ENCODE measurements at regions of chr22 and their contacts with region 1.

Region 1: GRCh38 chr22:40116496-40117200 is 61.1 kb upstream of the TNRC6B start:
- DNase-seq: peak; percentile 74 to 87 (median 81)
- H3K4me3 ChIP-seq: no peak overlapping the region
- H3K4me3 Mint-ChIP-seq: peak overlapping the region; percentile 56 to 87 (median 68)
- H3K27ac ChIP-seq: peak overlapping the region; percentile 42
- H3K27ac Mint-ChIP-seq: peak overlapping the region; percentile 81 to 94 (median 86)
- H3K4me1 ChIP-seq: peaks cover 67% of the 10 kb centered on the region
- H3K4me1 Mint-ChIP-seq: peaks cover 53 to 86% (median 68%) of the 10 kb centered on the region in 4 donors
- H3K27me3 ChIP-seq: no peaks in the 10 kb centered on the region
- H3K27me3 Mint-ChIP-seq: no peaks in the 10 kb centered on the region

Region 2: GRCh38 chr22:40055143-40055883 is 61.3 kb before region 1 on chr22:
- CTCF ChIA-PET with region 1: no interaction called
- POLR2A ChIA-PET with region 1: no interaction called
- intact Hi-C with region 1: loop called (anchors 5 kb)
- DNase-seq: peak; percentile 53 to 78 (median 63)
- H3K4me3 ChIP-seq: peak overlapping the region; percentile 30 to 33
- H3K4me3 Mint-ChIP-seq: peak overlapping the region; percentile 59 to 86 (median 77)
- H3K27ac ChIP-seq: peak overlapping the region; percentile 64
- H3K27ac Mint-ChIP-seq: peak overlapping the region; percentile 90 to 96 (median 93)
- H3K4me1 ChIP-seq: peaks cover 92% of the 10 kb centered on the region
- H3K4me1 Mint-ChIP-seq: peaks cover 65 to 91% (median 78%) of the 10 kb centered on the region in 4 donors
- H3K27me3 ChIP-seq: no peaks in the 10 kb centered on the region
- H3K27me3 Mint-ChIP-seq: no peaks in the 10 kb centered on the region

Region 3: GRCh38 chr22:40258017-40258416 is 141.4 kb after region 1 on chr22:
- CTCF ChIA-PET with region 1: no interaction called
- POLR2A ChIA-PET with region 1: no interaction called
- intact Hi-C with region 1: no loop called
- DNase-seq: peak in 2 of 5 donors; percentile 13 to 36
- H3K4me3 ChIP-seq: no peak overlapping the region
- H3K4me3 Mint-ChIP-seq: peak overlapping the region; percentile 23 to 79 (median 68)
- H3K27ac ChIP-seq: peak overlapping the region; percentile 43
- H3K27ac Mint-ChIP-seq: peak overlapping the region; percentile 65 to 94 (median 81)
- H3K4me1 ChIP-seq: peaks cover 84% of the 10 kb centered on the region
- H3K4me1 Mint-ChIP-seq: peaks cover 52 to 81% (median 69%) of the 10 kb centered on the region in 4 donors
- H3K27me3 ChIP-seq: no peaks in the 10 kb centered on the region
- H3K27me3 Mint-ChIP-seq: no peaks in the 10 kb centered on the region

Measured in CD4-positive, alpha-beta memory T cell (primary cell).